Colonic mucosa (tissue), 4 donors: ENCODE measurements at regions of chr14 and their contacts with region 1.

Region 1: GRCh38 chr14:79011091-79011919 is 841.1 kb downstream of the NRXN3 start:
- DNase-seq: peak; percentile 18
- H3K4me3 ChIP-seq: no peak overlapping the region
- H3K27ac ChIP-seq: no peak overlapping the region
- H3K4me1 ChIP-seq: no peaks in the 10 kb centered on the region
- H3K27me3 ChIP-seq: no peaks in the 10 kb centered on the region
- CTCF ChIP-seq: peak; percentile 27

Region 2: DNA sequence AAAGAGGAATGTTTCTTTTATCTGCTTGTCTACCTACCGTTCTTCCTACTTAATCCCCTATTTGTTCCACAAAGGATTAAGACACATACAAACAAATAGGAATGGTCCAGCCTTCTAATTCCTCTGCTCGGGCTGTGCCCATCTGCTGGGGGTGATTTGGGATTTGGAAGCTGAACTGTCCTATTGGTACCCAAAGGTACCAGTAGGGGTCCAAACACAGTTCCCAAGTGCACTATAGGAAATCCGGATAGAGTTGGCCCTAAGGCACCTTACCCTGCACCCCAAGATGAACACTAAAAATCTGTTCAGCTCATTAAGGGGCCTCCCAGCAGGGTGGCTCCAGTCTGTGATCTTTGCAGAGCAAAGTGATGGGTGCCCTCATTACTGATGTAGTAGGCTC is 274.2 kb before region 1 on chr14:
- intact Hi-C with region 1: no loop called
- DNase-seq: no peak
- H3K4me3 ChIP-seq: no peak overlapping the region
- H3K27ac ChIP-seq: no peak overlapping the region
- H3K4me1 ChIP-seq: no peaks in the 10 kb centered on the region
- H3K27me3 ChIP-seq: no peaks in the 10 kb centered on the region
- CTCF ChIP-seq: no peak

Region 3: GRCh38 chr14:78790271-78790670 is 221.0 kb before region 1 on chr14:
- intact Hi-C with region 1: no loop called
- DNase-seq: no peak
- H3K4me3 ChIP-seq: no peak overlapping the region
- H3K27ac ChIP-seq: no peak overlapping the region
- H3K4me1 ChIP-seq: no peaks in the 10 kb centered on the region
- H3K27me3 ChIP-seq: no peaks in the 10 kb centered on the region
- CTCF ChIP-seq: no peak

Region 4: DNA sequence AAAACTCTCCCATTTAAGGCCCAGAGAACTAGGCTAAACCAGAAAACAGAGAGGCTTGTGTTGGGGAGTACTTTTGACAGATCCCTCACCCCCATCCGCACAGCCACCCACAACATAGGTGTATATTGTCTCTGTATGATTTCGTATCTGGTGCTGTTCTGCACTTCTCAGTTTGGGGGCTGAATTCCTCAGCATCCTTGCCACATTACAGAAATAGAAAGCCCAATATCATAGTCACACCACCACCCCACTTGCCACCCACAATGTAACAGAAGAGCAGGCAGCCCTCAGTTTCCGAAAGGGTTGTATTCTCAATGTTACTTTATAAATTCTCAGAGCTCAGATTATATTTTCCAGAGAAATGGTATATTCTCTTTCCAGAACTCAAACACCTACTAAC is 249.1 kb after region 1 on chr14:
- intact Hi-C with region 1: no loop called
- DNase-seq: no peak
- H3K4me3 ChIP-seq: no peak overlapping the region
- H3K27ac ChIP-seq: no peak overlapping the region
- H3K4me1 ChIP-seq: no peaks in the 10 kb centered on the region
- H3K27me3 ChIP-seq: no peaks in the 10 kb centered on the region
- CTCF ChIP-seq: no peak

Region 5: GRCh38 chr14:79278798-79279644 is 267.7 kb after region 1 on chr14:
- intact Hi-C with region 1: loop called (anchors 10 kb)
- DNase-seq: peak; percentile 87
- H3K4me3 ChIP-seq: peak overlapping the region; percentile 42
- H3K27ac ChIP-seq: no peak overlapping the region
- H3K4me1 ChIP-seq: no peaks in the 10 kb centered on the region
- H3K27me3 ChIP-seq: no peaks in the 10 kb centered on the region
- CTCF ChIP-seq: no peak